Mammary epithelial cell (primary cell): ENCODE measurements at regions of chr3 and their contacts with region 1.

Region 1: DNA sequence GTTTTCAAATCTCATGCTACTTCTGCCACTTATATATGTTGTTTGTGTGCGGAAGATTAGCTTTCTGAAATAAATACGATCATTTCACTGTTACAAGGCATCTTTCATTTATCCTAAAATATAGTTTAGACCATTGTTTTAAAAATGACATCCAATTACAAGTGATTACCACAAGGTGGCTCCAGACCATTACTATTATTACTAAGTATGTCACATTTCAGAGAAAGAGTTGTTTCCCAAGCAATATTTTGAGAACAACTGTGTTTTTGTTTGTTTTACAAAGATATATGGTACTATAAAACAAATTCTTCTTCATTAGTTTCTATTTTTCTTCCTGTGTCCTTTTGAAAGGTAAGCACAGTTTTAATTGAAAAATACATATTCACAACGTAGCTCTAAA is 136.0 kb upstream of the RAP2B start:
- DNase-seq: peak; percentile 21
- H3K4me3 ChIP-seq: no peak overlapping the region
- H3K27ac ChIP-seq: no peak overlapping the region
- H3K4me1 ChIP-seq: peaks cover 9% of the 10 kb centered on the region
- H3K27me3 ChIP-seq: no peaks in the 10 kb centered on the region
- CTCF ChIP-seq: peak; percentile 60 to 66

Region 2: GRCh38 chr3:152909180-152909883 is 116.7 kb before region 1 on chr3:
- CTCF ChIA-PET with region 1: no interaction called
- dilution Hi-C with region 1: no loop called
- in situ Hi-C with region 1: no loop called
- intact Hi-C with region 1: no loop called
- DNase-seq: no peak
- H3K4me3 ChIP-seq: no peak overlapping the region
- H3K27ac ChIP-seq: no peak overlapping the region
- H3K4me1 ChIP-seq: no peaks in the 10 kb centered on the region
- H3K27me3 ChIP-seq: no peaks in the 10 kb centered on the region
- CTCF ChIP-seq: no peak

Region 3: GRCh38 chr3:153090973-153091372 is 64.9 kb after region 1 on chr3:
- CTCF ChIA-PET with region 1: no interaction called
- dilution Hi-C with region 1: no loop called
- in situ Hi-C with region 1: no loop called
- intact Hi-C with region 1: no loop called
- DNase-seq: no peak
- H3K4me3 ChIP-seq: no peak overlapping the region
- H3K27ac ChIP-seq: no peak overlapping the region
- H3K4me1 ChIP-seq: peaks cover 7% of the 10 kb centered on the region
- H3K27me3 ChIP-seq: no peaks in the 10 kb centered on the region
- CTCF ChIP-seq: no peak

Region 4: GRCh38 chr3:153284282-153284938 is 258.4 kb after region 1 on chr3:
- CTCF ChIA-PET with region 1: no interaction called
- dilution Hi-C with region 1: no loop called
- in situ Hi-C with region 1: loop called in 1 of 2 experiments (anchors 25 kb)
- intact Hi-C with region 1: no loop called
- DNase-seq: peak; percentile 81
- H3K4me3 ChIP-seq: no peak overlapping the region
- H3K27ac ChIP-seq: peak overlapping the region; percentile 97
- H3K4me1 ChIP-seq: peaks cover 42% of the 10 kb centered on the region
- H3K27me3 ChIP-seq: no peaks in the 10 kb centered on the region
- CTCF ChIP-seq: no peak

Region 5: DNA sequence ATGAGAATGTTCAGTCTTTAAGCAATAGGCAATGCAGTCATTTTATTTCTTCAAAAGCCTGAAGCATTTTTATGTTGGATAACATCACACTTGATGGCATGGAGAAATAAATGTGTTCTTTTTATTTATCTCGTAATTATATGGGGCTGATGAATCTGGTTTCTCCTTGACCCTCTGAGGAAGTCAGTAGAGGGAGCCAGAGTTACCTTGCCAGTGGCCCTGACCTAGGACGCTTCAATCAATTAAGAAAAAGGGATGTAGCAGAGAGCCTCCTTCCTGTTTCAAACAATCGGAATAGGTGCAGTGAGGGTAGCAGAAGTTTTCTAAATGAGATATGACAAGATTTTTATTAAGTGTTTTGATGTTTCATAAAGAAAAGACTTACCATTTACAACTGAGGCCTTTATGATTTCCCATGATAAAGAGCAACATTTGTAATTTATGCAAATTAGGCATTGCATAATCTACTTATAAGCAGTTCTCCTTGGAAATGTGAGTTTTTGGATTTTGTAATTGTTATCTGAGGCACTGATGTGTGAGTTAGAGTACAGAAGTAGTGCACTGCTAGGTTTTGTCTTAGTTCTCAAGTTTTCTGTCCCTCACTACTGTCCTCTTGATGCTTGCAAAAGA is 265.1 kb after region 1 on chr3:
- CTCF ChIA-PET with region 1: no interaction called
- dilution Hi-C with region 1: no loop called
- in situ Hi-C with region 1: loop called in 1 of 2 experiments (anchors 25 kb)
- intact Hi-C with region 1: loop called (anchors 5 kb)
- DNase-seq: peak; percentile 31
- H3K4me3 ChIP-seq: no peak overlapping the region
- H3K27ac ChIP-seq: no peak overlapping the region
- H3K4me1 ChIP-seq: peaks cover 34% of the 10 kb centered on the region
- H3K27me3 ChIP-seq: no peaks in the 10 kb centered on the region
- CTCF ChIP-seq: peak; percentile 35 to 70

Region 6: GRCh38 chr3:153443961-153444360 is 417.9 kb after region 1 on chr3:
- CTCF ChIA-PET with region 1: no interaction called
- dilution Hi-C with region 1: no loop called
- in situ Hi-C with region 1: no loop called
- intact Hi-C with region 1: loop called (anchors 5 kb)
- DNase-seq: no peak
- H3K4me3 ChIP-seq: no peak overlapping the region
- H3K27ac ChIP-seq: no peak overlapping the region
- H3K4me1 ChIP-seq: no peaks in the 10 kb centered on the region
- H3K27me3 ChIP-seq: no peaks in the 10 kb centered on the region
- CTCF ChIP-seq: peak in 1 of 2 donors; percentile 9

Region 7: DNA sequence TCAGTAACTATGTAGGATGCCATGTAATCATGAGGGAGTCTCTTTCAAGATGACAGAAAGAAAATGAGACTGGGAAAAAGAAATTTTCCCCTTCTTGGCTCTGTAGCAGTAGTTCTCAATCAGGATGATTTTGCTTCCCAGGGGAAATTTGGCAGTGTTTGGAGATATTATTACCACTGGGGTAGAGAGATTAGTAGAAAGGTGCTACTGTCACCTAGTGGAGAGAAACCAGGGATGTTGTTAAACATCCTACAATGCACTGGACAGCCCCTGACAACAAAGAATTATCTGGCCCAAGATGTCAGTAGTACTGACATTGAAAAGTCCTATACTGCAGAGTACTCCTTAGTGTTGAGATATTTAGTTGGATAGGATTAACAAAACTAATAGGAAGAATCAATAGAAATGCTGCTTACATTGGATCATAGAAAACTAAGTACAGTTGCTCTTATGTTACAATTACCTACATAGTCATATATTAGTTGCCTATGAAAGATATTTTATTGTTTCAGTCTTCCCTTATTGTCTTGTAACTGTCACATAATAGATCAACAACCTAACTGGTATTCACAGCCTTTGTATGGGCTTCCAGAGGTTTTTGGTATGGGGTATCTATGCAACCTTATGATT is 569.3 kb after region 1 on chr3:
- CTCF ChIA-PET with region 1: no interaction called
- dilution Hi-C with region 1: no loop called
- in situ Hi-C with region 1: loop called (anchors 10 kb)
- intact Hi-C with region 1: loop called (anchors 1 kb)
- DNase-seq: peak; percentile 45
- H3K4me3 ChIP-seq: no peak overlapping the region
- H3K27ac ChIP-seq: no peak overlapping the region
- H3K4me1 ChIP-seq: peaks cover 18% of the 10 kb centered on the region
- H3K27me3 ChIP-seq: no peaks in the 10 kb centered on the region
- CTCF ChIP-seq: peak; percentile 78 to 96

Region 8: GRCh38 chr3:154252759-154253638 is 1227.0 kb after region 1 on chr3:
- CTCF ChIA-PET with region 1: no interaction called
- dilution Hi-C with region 1: no loop called
- in situ Hi-C with region 1: no loop called
- intact Hi-C with region 1: loop called (anchors 10 kb)
- DNase-seq: peak; percentile 69
- H3K4me3 ChIP-seq: no peak overlapping the region
- H3K27ac ChIP-seq: no peak overlapping the region
- H3K4me1 ChIP-seq: no peaks in the 10 kb centered on the region
- H3K27me3 ChIP-seq: no peaks in the 10 kb centered on the region
- CTCF ChIP-seq: peak; percentile 92 to 96